ENCODE measurements at regions of chr7 and their contacts with region 1.

Region 1: DNA sequence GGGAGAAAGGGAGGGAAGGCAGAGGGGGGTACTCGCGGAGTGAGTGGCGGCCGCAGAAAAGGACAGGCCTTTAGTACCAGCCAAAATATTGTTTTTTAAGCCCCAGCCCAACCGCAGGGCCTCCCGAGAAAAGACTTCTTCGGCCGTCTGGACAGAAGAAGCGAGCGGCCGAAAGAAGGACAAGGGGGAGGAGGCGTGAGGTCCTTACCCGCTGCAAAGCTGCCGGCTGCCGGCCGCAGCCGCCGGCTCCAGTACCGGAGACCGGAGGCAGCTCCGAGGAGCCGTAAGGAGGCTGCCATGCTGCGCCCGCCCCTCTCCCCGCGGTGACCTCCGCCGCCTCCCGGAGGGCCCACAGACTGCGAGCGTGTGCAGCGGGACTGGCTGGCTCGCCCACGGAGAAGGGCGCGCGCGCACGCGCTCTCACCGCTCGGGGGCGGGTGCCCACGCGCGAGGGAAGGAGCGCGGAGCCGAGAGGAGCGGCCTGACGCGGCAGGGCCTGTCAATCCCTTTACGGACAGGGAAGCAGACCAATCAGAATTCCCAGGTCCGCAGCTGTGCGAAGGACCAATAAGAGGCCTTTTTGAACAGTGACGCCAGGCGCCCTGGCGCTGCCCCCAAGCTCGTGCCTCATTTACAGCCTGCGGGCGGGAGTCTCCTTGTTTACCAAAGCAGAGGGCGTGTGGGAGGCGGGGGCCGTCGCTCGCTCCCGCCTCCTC is at the start of gene HIBADH:
- DNase-seq: peak; percentile 99
- H3K4me3 ChIP-seq: peak within 1 kb of the TSS; percentile 74
- H3K27ac ChIP-seq: peak within 1 kb of the TSS; percentile 24
- H3K4me1 ChIP-seq: peaks cover 16% of the 10 kb centered on the region
- CTCF ChIP-seq: peak; percentile 10; the same call in 1 of the 2 replicates
- total RNA-seq, gene HIBADH: 22.8 and 24.0 TPM in 2 replicates

Region 2: GRCh38 chr7:27677912-27678612 is 15.4 kb after region 1 on chr7:
- CTCF ChIA-PET with region 1: no interaction called
- POLR2A ChIA-PET with region 1: no interaction called
- intact Hi-C with region 1: no loop called
- DNase-seq: no peak
- H3K4me3 ChIP-seq: no peak overlapping the region
- H3K27ac ChIP-seq: no peak overlapping the region
- H3K4me1 ChIP-seq: no peaks in the 10 kb centered on the region
- CTCF ChIP-seq: no peak

Region 3: GRCh38 chr7:27739909-27740448 is 77.3 kb after region 1 on chr7 and contains the start of gene TAX1BP1:
- CTCF ChIA-PET with region 1: interaction called, 3 read pairs
- POLR2A ChIA-PET with region 1: no interaction called
- intact Hi-C with region 1: loop called (anchors 2 kb)
- DNase-seq: peak; percentile 94
- H3K4me3 ChIP-seq: peak within 1 kb of the TSS; percentile 87
- H3K27ac ChIP-seq: peak within 1 kb of the TSS; percentile 53
- H3K4me1 ChIP-seq: peaks cover 12% of the 10 kb centered on the region
- CTCF ChIP-seq: no peak
- total RNA-seq, gene TAX1BP1: 24.2 and 27.9 TPM in 2 replicates

Region 4: DNA sequence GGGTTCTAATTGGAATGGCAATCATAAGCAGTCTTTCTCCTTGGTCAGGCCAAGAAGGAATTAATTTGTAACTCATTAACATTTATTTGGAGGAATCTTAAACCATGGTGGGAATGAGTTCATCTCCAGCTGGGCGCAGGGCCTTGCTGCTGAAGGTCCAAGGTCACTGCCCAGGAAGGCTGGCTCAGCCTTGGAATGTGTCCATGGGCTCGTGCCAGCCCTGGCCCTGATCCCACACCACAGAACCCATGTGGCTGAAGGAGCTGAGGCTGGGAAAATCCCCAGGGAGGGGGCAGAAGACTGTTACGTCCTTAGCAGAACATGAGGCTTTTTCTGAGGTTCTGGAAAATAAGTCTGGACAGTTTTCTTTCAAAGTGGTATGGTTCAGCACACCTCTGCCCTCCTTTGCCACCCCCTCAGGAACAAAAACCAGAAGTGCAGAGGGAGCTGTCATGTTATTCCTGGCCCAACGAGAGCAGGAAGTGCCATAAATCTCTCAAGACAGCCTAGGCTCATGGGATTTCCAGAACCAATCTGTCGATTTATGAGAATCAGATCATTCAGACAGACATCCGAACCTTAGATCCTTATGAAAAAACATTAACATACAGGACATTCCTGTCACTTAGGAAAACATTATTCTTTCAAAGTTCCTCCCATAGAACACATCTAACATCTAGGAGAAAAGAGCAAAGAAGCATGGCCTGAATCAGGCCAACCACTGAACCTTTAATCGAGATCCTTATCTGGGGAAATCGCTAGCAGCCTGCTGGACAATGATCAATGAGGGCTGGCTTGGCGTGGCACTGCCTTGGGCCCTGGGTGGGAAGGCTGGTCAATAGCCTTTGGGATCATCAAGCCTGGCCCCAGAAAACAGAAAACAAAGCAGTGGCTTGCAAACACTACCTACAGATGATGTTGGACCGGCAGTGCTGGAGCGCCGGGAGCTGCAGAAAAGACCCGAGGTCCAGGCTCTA is 211.6 kb after region 1 on chr7:
- CTCF ChIA-PET with region 1: no interaction called
- POLR2A ChIA-PET with region 1: no interaction called
- intact Hi-C with region 1: no loop called
- DNase-seq: no peak
- H3K4me3 ChIP-seq: no peak overlapping the region
- H3K27ac ChIP-seq: no peak overlapping the region
- H3K4me1 ChIP-seq: no peaks in the 10 kb centered on the region
- CTCF ChIP-seq: no peak